Heart left ventricle (tissue), 16 donors: ENCODE measurements at regions of chr17 and their contacts with region 1.

Region 1: GRCh38 chr17:4004517-4005295 is 40.5 kb upstream of the ATP2A3 start:
- DNase-seq: peak; percentile 51 to 84 (median 57)
- ATAC-seq: peak in 3 of 4 donors; percentile 52 to 70 (median 63)
- H3K4me3 ChIP-seq: no peak overlapping the region
- H3K27ac ChIP-seq: peak overlapping the region in 2 of 12 donors; percentile 41 to 59
- H3K4me1 ChIP-seq: peaks cover 0 to 39% (median 6%) of the 10 kb centered on the region in 12 donors
- H3K27me3 ChIP-seq: no peaks in the 10 kb centered on the region
- CTCF ChIP-seq: peak; percentile 80 to 97 (median 94)
- POLR2A ChIP-seq: peak in 1 of 2 donors; percentile 13

Region 2: DNA sequence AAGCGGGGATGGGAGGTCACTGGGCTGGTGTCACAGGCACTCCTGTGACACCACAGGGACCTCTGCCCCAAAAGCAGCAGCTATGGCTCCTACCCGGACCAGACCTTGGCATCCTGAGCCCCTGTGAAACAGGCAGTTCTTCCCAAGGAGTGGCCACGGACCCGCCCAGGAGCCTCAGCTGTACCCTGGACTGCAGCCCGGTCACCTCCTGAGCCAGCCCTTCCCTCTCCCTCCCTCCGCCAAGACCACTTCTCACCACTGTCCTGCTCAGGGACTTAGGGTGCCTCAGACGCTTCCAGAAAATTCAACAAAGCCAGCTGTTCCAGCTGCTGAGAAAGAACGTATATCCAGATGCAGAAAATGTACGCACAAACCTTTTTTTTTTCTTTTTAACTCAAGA is 144.8 kb before region 1 on chr17:
- intact Hi-C with region 1: loop called in 7 of 10 experiments (anchors 2 to 10 kb)
- DNase-seq: no peak
- ATAC-seq: no peak
- H3K4me3 ChIP-seq: no peak overlapping the region
- H3K27ac ChIP-seq: no peak overlapping the region
- H3K4me1 ChIP-seq: peaks cover 0 to 3% (median 0%) of the 10 kb centered on the region in 12 donors
- H3K27me3 ChIP-seq: no peaks in the 10 kb centered on the region
- CTCF ChIP-seq: no peak
- POLR2A ChIP-seq: no peak

Region 3: DNA sequence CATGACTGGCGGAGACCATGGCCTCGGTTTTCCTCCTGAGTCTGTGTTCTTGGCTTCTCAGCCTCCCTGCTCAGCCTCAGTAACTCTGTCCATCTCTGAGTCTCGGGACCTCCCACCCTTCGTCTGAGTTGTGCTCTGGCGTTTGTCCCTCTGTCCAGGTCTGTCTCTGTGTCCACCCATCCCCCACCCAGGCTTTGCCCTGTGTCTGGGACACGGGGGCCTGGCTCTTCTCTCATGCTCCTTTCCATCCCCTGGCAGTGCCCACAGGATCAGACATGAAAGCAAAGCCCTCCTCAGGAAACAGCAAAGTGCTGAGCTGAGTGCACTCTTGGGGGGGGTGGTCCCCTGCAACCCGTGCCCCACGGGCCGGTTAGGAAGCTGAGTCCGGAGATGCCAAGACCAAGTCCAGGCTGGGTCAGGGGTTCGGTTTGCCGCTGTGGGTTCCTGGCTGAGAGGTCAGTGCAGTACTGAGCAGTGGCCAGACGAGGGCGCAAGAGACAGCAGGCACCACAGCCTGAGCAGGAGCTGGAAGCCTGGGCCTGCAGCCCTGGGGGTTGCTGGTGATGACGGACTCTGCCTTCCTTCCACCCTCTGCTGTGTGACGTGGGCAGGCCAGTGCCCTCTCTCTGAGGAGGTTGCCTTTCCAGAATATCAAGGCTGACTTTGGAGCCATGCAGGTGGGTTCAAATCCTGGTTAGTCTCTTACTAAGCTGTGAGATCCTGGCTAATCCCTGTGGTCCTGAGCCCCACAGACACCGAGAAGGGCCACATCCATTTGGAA is 91.0 kb before region 1 on chr17:
- intact Hi-C with region 1: loop called in 4 of 10 experiments (anchors 1 to 5 kb)
- DNase-seq: peak; percentile 77 to 88 (median 83)
- ATAC-seq: peak; percentile 56 to 79 (median 70)
- H3K4me3 ChIP-seq: peak overlapping the region in 2 of 12 donors; percentile 12 to 53
- H3K27ac ChIP-seq: peak overlapping the region in 3 of 12 donors; percentile 9 to 79 (median 41)
- H3K4me1 ChIP-seq: peaks cover 3 to 52% (median 31%) of the 10 kb centered on the region in 12 donors
- H3K27me3 ChIP-seq: no peaks in the 10 kb centered on the region
- CTCF ChIP-seq: peak; percentile 92 to 99 (median 96)
- POLR2A ChIP-seq: no peak

Region 4: GRCh38 chr17:3935140-3935542 is 69.6 kb before region 1 on chr17:
- intact Hi-C with region 1: loop called in 9 of 10 experiments (anchors 1 to 2 kb)
- DNase-seq: peak in 4 of 5 donors; percentile 73 to 83 (median 78)
- ATAC-seq: peak; percentile 87 to 98 (median 96)
- H3K4me3 ChIP-seq: no peak overlapping the region
- H3K27ac ChIP-seq: no peak overlapping the region
- H3K4me1 ChIP-seq: peaks cover 0 to 6% (median 0%) of the 10 kb centered on the region in 12 donors
- H3K27me3 ChIP-seq: no peaks in the 10 kb centered on the region
- CTCF ChIP-seq: peak; percentile 60 to 82 (median 72)
- POLR2A ChIP-seq: no peak

Region 5: DNA sequence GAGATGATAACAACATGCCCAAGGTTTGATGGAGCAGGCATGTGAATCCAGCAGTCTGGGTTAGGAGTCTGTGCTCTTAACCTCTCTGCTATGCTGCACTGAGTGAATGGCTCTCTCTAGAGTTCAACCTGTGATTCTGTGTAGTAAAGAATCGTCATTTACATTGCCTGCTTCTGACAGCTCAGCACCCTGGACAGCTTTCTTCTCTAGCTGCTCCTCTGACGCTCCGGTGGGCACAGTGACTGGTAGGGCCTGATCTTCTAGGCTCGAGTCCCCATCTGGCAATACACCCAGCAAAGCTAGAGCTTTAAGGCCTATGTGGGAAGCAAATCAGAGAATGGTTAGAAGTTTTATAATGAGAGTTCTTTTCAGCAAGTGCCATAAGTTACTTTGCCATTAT is 44.8 kb after region 1 on chr17:
- intact Hi-C with region 1: no loop called
- DNase-seq: no peak
- ATAC-seq: no peak
- H3K4me3 ChIP-seq: no peak overlapping the region
- H3K27ac ChIP-seq: no peak overlapping the region
- H3K4me1 ChIP-seq: no peaks in the 10 kb centered on the region
- H3K27me3 ChIP-seq: no peaks in the 10 kb centered on the region
- CTCF ChIP-seq: no peak
- POLR2A ChIP-seq: no peak